ENCODE measurements at regions of chr15 and their contacts with region 1.

Region 1: DNA sequence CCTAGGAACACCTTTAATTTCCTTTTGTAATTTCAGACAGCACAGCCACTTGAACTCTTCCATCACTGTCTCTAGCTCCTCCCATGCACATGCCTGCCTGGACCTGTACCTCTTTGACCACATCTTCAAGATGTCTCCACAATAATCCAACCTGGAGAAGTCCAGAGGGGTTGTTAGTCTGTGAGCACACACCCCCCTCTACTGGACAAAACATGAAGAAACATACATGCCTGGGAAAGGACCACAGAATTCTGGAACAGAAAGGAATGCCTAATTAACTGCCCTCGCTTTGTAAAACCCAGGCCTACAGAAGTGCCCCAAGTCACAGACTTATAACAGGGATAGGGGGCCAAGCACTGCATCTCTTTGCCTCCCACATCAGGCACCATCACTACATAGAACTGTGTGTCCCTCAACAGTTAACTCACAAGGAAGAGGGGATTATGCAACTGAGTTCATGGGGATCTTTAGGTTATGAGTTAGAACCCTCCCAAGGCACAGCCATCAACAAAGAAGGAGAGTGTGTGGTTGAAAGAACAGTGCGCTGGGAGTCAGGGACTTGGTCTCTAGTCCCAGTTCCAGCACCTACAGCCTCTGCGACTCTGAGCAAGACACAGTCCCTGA is 61.7 kb downstream of the FMN1 start:
- DNase-seq: peak; percentile 91
- H3K4me3 Mint-ChIP-seq: no peak overlapping the region
- H3K27ac Mint-ChIP-seq: no peak overlapping the region
- H3K4me1 Mint-ChIP-seq: peaks cover 12% of the 10 kb centered on the region
- H3K27me3 Mint-ChIP-seq: no peaks in the 10 kb centered on the region
- CTCF ChIP-seq: peak; percentile 80

Region 2: DNA sequence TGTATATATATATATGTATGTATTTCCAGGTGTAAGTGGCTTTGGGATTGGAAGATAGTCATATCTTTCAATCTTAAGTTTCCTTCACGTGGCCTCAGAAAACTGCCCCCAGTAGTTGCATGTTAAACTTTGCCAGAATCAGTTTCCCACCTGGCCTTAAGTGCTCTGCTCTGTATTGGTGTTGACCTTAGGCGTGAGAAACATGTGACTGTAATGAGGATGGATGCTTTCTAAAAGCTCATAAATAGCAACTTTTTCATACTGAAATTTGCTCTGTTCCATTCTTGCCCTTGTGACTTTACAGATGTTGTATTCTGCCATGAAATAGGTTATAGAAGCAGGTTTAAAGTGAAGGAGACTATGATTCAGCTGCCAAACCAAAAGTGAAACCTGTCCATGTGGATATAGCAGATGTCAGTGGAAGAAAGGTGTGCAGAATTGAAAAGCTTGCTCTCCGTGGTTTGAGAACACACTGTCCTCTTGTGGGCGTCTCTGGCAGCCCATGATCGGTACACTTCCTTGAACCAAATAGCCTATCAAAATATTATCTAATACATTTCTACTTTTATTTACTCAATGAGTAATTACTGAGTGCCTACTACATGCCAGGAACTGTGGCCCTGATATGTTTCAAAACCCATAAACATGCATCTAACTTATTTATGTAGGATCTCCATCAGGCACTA is 475.5 kb before region 1 on chr15:
- CTCF ChIA-PET with region 1: interaction called, 11 read pairs
- POLR2A ChIA-PET with region 1: interaction called, 3 read pairs
- intact Hi-C with region 1: loop called (anchors 5 kb)
- DNase-seq: peak; percentile 38
- H3K4me3 Mint-ChIP-seq: peak overlapping the region; percentile 51
- H3K27ac Mint-ChIP-seq: peak overlapping the region; percentile 39
- H3K4me1 Mint-ChIP-seq: peaks cover 28% of the 10 kb centered on the region
- H3K27me3 Mint-ChIP-seq: no peaks in the 10 kb centered on the region
- CTCF ChIP-seq: peak; percentile 6

Region 3: GRCh38 chr15:33013827-33014445 is 118.9 kb before region 1 on chr15:
- CTCF ChIA-PET with region 1: interaction called, 108 read pairs
- POLR2A ChIA-PET with region 1: interaction called, 5 read pairs
- intact Hi-C with region 1: no loop called
- DNase-seq: peak; percentile 75
- H3K4me3 Mint-ChIP-seq: no peak overlapping the region
- H3K27ac Mint-ChIP-seq: peak overlapping the region; percentile 73
- H3K4me1 Mint-ChIP-seq: peaks cover 13% of the 10 kb centered on the region
- H3K27me3 Mint-ChIP-seq: no peaks in the 10 kb centered on the region
- CTCF ChIP-seq: no peak

Region 4: GRCh38 chr15:33080006-33080405 is 52.8 kb before region 1 on chr15:
- CTCF ChIA-PET with region 1: interaction called, 292 read pairs
- POLR2A ChIA-PET with region 1: interaction called, 4 read pairs
- intact Hi-C with region 1: no loop called
- DNase-seq: no peak
- H3K4me3 Mint-ChIP-seq: no peak overlapping the region
- H3K27ac Mint-ChIP-seq: no peak overlapping the region
- H3K4me1 Mint-ChIP-seq: no peaks in the 10 kb centered on the region
- H3K27me3 Mint-ChIP-seq: no peaks in the 10 kb centered on the region
- CTCF ChIP-seq: no peak

Region 5: DNA sequence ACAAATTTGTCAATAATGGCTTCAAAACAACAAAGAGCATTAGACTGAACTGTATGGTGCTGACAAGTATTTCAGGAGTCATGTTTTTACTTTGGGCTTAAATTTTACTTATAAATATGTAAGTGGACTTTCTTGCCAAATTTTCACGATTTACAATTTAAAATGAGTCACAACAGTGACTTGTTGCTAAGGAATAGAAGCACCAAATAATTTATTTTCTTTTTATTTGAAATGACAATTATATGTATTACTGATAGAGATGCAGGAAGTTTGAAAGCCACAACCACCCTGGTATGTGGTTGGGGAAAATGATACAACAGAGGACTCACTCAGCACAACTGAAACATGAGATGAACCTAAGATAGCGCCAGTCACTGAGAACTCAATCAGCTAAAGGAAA is 28.6 kb before region 1 on chr15:
- CTCF ChIA-PET with region 1: interaction called, 29 read pairs
- POLR2A ChIA-PET with region 1: interaction called, 4 read pairs
- intact Hi-C with region 1: no loop called
- DNase-seq: peak; percentile 43
- H3K4me3 Mint-ChIP-seq: no peak overlapping the region
- H3K27ac Mint-ChIP-seq: peak overlapping the region; percentile 74
- H3K4me1 Mint-ChIP-seq: peaks cover 13% of the 10 kb centered on the region
- H3K27me3 Mint-ChIP-seq: peaks cover 11% of the 10 kb centered on the region
- CTCF ChIP-seq: no peak

Region 6: GRCh38 chr15:33201491-33202231 is 68.8 kb after region 1 on chr15:
- CTCF ChIA-PET with region 1: interaction called, 4 read pairs
- POLR2A ChIA-PET with region 1: no interaction called
- intact Hi-C with region 1: loop called (anchors 5 kb)
- DNase-seq: peak; percentile 84
- H3K4me3 Mint-ChIP-seq: peak overlapping the region; percentile 71
- H3K27ac Mint-ChIP-seq: peak overlapping the region; percentile 47
- H3K4me1 Mint-ChIP-seq: peaks cover 20% of the 10 kb centered on the region
- H3K27me3 Mint-ChIP-seq: no peaks in the 10 kb centered on the region
- CTCF ChIP-seq: peak; percentile 36

Measured in MCF 10A (cell line).